ENCODE measurements at regions of chr3 and their contacts with region 1.

Region 1: GRCh38 chr3:111717601-111718000 is 122.5 kb upstream of the ZBED2 start:
- DNase-seq: peak; percentile 60 to 70 (median 65)
- H3K4me3 ChIP-seq: no peak overlapping the region
- H3K4me3 Mint-ChIP-seq: no peak overlapping the region
- H3K27ac ChIP-seq: no peak overlapping the region
- H3K27ac Mint-ChIP-seq: peak overlapping the region in 5 of 7 donors; percentile 4 to 78 (median 73)
- H3K4me1 ChIP-seq: no peaks in the 10 kb centered on the region
- H3K4me1 Mint-ChIP-seq: peaks cover 0 to 5% (median 4%) of the 10 kb centered on the region in 4 donors
- H3K27me3 ChIP-seq: no peaks in the 10 kb centered on the region
- H3K27me3 Mint-ChIP-seq: no peaks in the 10 kb centered on the region

Region 2: GRCh38 chr3:111539351-111540331 is 178.0 kb before region 1 on chr3:
- CTCF ChIA-PET with region 1: no interaction called
- POLR2A ChIA-PET with region 1: no interaction called
- intact Hi-C with region 1: no loop called
- DNase-seq: peak; percentile 51 to 67 (median 58)
- H3K4me3 ChIP-seq: peak overlapping the region; percentile 46 to 63
- H3K4me3 Mint-ChIP-seq: peak overlapping the region; percentile 65 to 87 (median 84)
- H3K27ac ChIP-seq: peak overlapping the region; percentile 33
- H3K27ac Mint-ChIP-seq: peak overlapping the region in 6 of 7 donors; percentile 51 to 96 (median 86)
- H3K4me1 ChIP-seq: peaks cover 51% of the 10 kb centered on the region
- H3K4me1 Mint-ChIP-seq: peaks cover 8 to 68% (median 41%) of the 10 kb centered on the region in 4 donors
- H3K27me3 ChIP-seq: no peaks in the 10 kb centered on the region
- H3K27me3 Mint-ChIP-seq: no peaks in the 10 kb centered on the region

Region 3: DNA sequence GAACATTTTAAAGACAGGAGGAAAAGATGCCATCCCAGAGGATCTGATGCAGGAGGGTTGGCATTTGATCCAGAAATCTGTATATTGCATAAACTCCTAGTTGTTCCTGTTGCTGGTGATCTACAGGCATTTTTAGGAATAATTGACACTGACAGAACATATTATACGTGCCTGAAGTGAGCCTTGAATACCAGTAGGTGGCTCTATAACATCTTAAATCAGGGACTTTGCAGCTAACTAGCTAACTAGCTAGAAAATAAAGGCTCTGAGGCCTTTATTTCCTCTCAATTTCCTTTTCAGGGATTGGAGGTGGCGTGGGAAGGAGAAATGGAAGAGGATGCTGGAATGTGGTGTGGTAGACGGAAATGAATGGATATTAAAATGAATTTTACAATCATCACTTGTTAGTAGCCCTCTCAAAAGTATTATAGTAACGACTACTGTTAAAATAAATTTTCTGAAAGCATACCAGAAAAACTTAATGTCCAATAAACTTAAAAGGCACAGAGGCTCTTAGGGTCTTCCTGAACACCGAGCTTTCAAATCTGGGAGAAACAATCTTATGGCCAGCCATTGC is 48.6 kb before region 1 on chr3:
- CTCF ChIA-PET with region 1: interaction called, 5 read pairs
- POLR2A ChIA-PET with region 1: interaction called, 9 read pairs
- intact Hi-C with region 1: loop called (anchors 1 kb)
- DNase-seq: peak in 4 of 5 donors; percentile 55 to 60 (median 58)
- H3K4me3 ChIP-seq: no peak overlapping the region
- H3K4me3 Mint-ChIP-seq: peak overlapping the region in 5 of 8 donors; percentile 26 to 74 (median 38)
- H3K27ac ChIP-seq: peak overlapping the region; percentile 18
- H3K27ac Mint-ChIP-seq: peak overlapping the region; percentile 24 to 93 (median 87)
- H3K4me1 ChIP-seq: peaks cover 68% of the 10 kb centered on the region
- H3K4me1 Mint-ChIP-seq: peaks cover 51 to 84% (median 67%) of the 10 kb centered on the region in 4 donors
- H3K27me3 ChIP-seq: no peaks in the 10 kb centered on the region
- H3K27me3 Mint-ChIP-seq: no peaks in the 10 kb centered on the region

Region 4: DNA sequence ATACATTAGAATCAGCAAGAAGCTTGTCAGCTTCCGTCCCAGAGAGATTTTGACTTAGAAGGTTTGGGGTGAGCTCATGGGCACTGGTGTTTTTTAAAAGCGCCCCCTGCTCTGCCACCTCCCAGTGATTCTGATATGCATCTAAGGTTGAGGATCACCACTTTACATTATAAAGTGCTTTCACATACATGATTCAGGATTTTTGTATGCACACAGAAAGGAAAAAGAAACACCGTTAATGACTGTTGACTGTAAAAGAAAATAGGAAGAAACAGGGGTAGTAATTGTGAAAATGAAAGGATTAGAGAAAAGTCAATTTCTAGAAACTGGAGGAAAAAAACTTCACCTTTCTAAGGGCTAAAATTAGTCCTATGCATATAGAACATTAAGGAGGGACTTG is 17.5 kb before region 1 on chr3:
- CTCF ChIA-PET with region 1: interaction called, 15 read pairs
- POLR2A ChIA-PET with region 1: no interaction called
- intact Hi-C with region 1: no loop called
- DNase-seq: no peak
- H3K4me3 ChIP-seq: no peak overlapping the region
- H3K4me3 Mint-ChIP-seq: peak overlapping the region in 2 of 8 donors; percentile 0 to 36
- H3K27ac ChIP-seq: no peak overlapping the region
- H3K27ac Mint-ChIP-seq: peak overlapping the region in 3 of 7 donors; percentile 3 to 51 (median 5)
- H3K4me1 ChIP-seq: peaks cover 10% of the 10 kb centered on the region
- H3K4me1 Mint-ChIP-seq: peaks cover 23 to 35% (median 26%) of the 10 kb centered on the region in 4 donors
- H3K27me3 ChIP-seq: no peaks in the 10 kb centered on the region
- H3K27me3 Mint-ChIP-seq: no peaks in the 10 kb centered on the region

Region 5: GRCh38 chr3:111859974-111860859 is 142.6 kb after region 1 on chr3:
- CTCF ChIA-PET with region 1: interaction called, 71 read pairs
- POLR2A ChIA-PET with region 1: interaction called, 4 read pairs
- intact Hi-C with region 1: loop called (anchors 1 kb)
- DNase-seq: peak; percentile 62 to 78 (median 71)
- H3K4me3 ChIP-seq: peak overlapping the region; percentile 59 to 84
- H3K4me3 Mint-ChIP-seq: peak overlapping the region; percentile 91 to 98 (median 97)
- H3K27ac ChIP-seq: peak overlapping the region; percentile 63
- H3K27ac Mint-ChIP-seq: peak overlapping the region; percentile 89 to 97 (median 95)
- H3K4me1 ChIP-seq: peaks cover 11% of the 10 kb centered on the region
- H3K4me1 Mint-ChIP-seq: peaks cover 15 to 47% (median 26%) of the 10 kb centered on the region in 4 donors
- H3K27me3 ChIP-seq: no peaks in the 10 kb centered on the region
- H3K27me3 Mint-ChIP-seq: peaks cover 0 to 1% of the 10 kb centered on the region in 2 donors

Region 6: GRCh38 chr3:111967651-111968274 is 250.2 kb after region 1 on chr3:
- CTCF ChIA-PET with region 1: interaction called, 423 read pairs
- POLR2A ChIA-PET with region 1: interaction called, 15 read pairs
- intact Hi-C with region 1: loop called (anchors 1 kb)
- DNase-seq: peak; percentile 69 to 77 (median 69)
- H3K4me3 ChIP-seq: no peak overlapping the region
- H3K4me3 Mint-ChIP-seq: peak overlapping the region in 1 of 8 donors; percentile 11
- H3K27ac ChIP-seq: no peak overlapping the region
- H3K27ac Mint-ChIP-seq: peak overlapping the region in 2 of 7 donors; percentile 43 to 44
- H3K4me1 ChIP-seq: no peaks in the 10 kb centered on the region
- H3K4me1 Mint-ChIP-seq: peaks cover 2 to 6% (median 4%) of the 10 kb centered on the region in 4 donors
- H3K27me3 ChIP-seq: no peaks in the 10 kb centered on the region
- H3K27me3 Mint-ChIP-seq: no peaks in the 10 kb centered on the region

Region 7: GRCh38 chr3:111989061-111989678 is 271.6 kb after region 1 on chr3:
- CTCF ChIA-PET with region 1: interaction called, 24 read pairs
- POLR2A ChIA-PET with region 1: no interaction called
- intact Hi-C with region 1: no loop called
- DNase-seq: peak in 4 of 5 donors; percentile 23 to 39 (median 26)
- H3K4me3 ChIP-seq: no peak overlapping the region
- H3K4me3 Mint-ChIP-seq: peak overlapping the region in 2 of 8 donors; percentile 26 to 39
- H3K27ac ChIP-seq: no peak overlapping the region
- H3K27ac Mint-ChIP-seq: no peak overlapping the region
- H3K4me1 ChIP-seq: peaks cover 17% of the 10 kb centered on the region
- H3K4me1 Mint-ChIP-seq: peaks cover 23 to 28% (median 25%) of the 10 kb centered on the region in 4 donors
- H3K27me3 ChIP-seq: no peaks in the 10 kb centered on the region
- H3K27me3 Mint-ChIP-seq: no peaks in the 10 kb centered on the region

Region 8: DNA sequence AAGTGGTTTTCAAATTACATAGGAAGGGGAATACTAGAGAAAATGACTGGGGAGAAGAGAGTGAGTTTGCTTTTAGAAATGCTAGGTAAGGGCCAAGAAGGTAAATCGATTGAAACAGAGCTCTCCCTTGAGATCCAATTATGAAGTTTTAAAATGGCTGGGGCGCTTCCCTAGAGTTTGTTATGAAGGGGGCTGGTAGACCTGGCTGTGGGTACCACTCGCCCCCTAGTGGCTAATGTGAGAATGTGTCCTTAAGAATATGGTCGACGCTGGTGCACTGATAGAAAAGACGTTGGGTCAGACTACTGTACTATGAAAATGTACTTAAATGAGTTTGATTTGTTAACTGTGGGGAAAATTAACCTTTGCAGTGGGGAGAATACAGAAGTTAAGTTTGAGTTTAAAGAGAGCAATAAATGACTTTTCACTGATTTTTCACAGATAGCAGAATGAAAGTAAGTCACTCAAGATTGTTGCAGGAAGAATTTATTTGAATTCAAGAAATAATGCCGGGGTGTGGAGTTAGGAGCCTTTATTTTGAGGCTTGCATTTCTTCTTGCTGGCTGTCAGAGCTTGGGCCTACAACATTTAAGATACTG is 326.1 kb after region 1 on chr3:
- CTCF ChIA-PET with region 1: interaction called, 4 read pairs
- POLR2A ChIA-PET with region 1: no interaction called
- intact Hi-C with region 1: loop called (anchors 1 kb)
- DNase-seq: peak; percentile 53 to 64 (median 56)
- H3K4me3 ChIP-seq: no peak overlapping the region
- H3K4me3 Mint-ChIP-seq: no peak overlapping the region
- H3K27ac ChIP-seq: no peak overlapping the region
- H3K27ac Mint-ChIP-seq: no peak overlapping the region
- H3K4me1 ChIP-seq: no peaks in the 10 kb centered on the region
- H3K4me1 Mint-ChIP-seq: no peaks in the 10 kb centered on the region
- H3K27me3 ChIP-seq: no peaks in the 10 kb centered on the region
- H3K27me3 Mint-ChIP-seq: peaks cover 1 to 2% of the 10 kb centered on the region in 2 donors

Measured in CD4-positive, alpha-beta memory T cell (primary cell).